ENCODE measurements at regions of chr15 and their contacts with region 1.

Region 1: DNA sequence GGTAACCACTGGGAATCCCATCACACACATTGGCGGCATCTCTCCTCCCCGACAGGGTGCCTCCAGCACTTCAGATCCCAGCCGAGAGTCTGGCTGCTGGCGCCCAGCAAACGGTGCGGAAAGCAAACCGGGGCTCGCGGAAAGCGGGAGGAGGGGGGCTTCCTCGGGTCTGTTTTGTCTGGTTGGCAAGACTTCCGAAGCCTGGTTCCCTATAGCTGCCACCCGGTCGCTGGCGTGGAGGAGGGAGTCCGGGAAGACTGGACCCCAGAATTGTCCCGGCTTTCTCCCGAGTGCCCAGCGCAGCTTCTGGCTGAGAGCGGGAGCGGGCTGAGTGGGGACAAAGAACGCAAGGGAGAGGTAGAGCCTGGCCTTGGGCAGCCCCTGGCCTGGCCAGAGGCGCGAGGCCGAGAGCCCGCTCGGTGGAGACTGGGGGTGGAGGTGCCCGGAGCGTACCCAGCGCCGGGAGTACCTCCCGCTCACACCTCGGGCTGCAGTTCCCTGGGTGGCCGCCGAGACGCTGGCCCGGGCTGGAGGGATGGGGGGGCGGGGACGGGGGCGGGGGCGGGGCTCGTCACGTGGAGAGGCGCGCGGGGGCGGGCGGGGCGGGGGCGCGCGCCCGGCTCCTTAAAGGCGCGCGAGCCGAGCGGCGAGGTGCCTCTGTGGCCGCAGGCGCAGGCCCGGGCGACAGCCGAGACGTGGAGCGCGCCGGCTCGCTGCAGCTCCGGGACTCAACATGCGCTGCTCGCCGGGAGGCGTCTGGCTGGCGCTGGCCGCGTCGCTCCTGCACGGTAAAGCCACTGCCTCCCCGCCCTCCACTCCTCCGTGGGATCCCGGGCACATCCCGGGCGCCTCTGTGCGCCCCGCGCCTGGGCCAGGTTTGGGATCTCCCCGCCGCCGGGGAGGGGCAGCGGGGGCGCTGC is at the start of gene CHRNA7:
- DNase-seq: peak; percentile 16 to 38
- ATAC-seq: peak; percentile 82 to 83
- H3K4me3 ChIP-seq: peak within 1 kb of the TSS; percentile 60 to 63 (median 61)
- H3K27ac ChIP-seq: peak within 1 kb of the TSS; percentile 17 to 57 (median 34)
- H3K4me1 ChIP-seq: peaks cover 10 to 13% of the 10 kb centered on the region in 2 donors
- H3K27me3 ChIP-seq: peaks cover 7 to 18% (median 10%) of the 10 kb centered on the region in 3 donors
- CTCF ChIP-seq: peak in 2 of 5 experiments; percentile 46 to 57
- POLR2A ChIP-seq: peak; percentile 57 to 71
- total RNA-seq, gene CHRNA7: 0.35 to 6.5 (median 0.66) TPM

Region 2: DNA sequence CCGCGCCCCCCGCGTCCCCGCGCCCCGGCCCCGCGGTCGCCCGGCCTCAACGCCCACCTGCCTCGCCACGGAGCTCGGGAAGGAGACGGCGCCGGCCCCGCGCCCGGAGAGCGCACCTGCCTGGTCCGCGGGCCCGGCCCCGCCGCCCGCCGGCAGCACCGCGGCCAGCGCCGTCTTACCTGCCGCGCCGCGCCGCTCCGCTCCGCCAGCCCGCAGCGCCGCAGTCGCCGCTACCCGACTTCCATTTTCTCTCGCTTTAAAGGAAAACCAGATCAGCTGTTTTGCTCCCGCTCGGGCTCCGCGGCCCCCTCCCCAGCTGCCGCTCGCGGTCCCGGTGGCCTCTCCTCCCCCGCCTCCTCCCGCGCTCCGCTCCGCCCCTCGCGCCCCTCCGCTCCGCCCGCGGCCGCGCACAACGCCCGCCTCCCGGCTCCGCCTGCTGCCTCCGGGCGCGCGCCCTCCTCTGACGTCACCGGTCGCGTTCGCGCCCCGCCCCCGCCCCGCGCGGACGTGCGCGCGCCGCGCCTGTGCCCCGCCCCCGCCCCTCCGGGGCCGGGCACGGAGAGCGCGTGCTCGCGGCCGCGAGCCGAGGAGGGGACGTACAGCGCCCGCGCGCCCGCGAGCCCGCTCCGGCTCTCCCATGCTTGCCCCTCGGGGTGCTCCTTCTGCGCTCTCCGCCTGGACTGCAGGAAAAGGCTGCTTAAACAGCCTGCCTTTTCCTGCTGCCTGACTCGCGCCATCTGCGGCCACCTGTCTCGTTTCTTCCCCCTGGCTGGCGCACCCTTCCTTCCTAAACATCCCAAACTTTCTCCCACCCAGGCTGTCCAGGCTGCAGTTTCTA is 159.6 kb before region 1 on chr15:
- in situ Hi-C with region 1: no loop called
- intact Hi-C with region 1: loop called (anchors 1 kb)
- DNase-seq: peak; percentile 74 to 75
- ATAC-seq: peak; percentile 88 to 90
- H3K4me3 ChIP-seq: peak within 1 kb of the TSS; percentile 64 to 85 (median 70)
- H3K27ac ChIP-seq: peak within 1 kb of the TSS; percentile 69 to 87 (median 84)
- H3K4me1 ChIP-seq: peaks cover 6% of the 10 kb centered on the region in 2 donors
- H3K27me3 ChIP-seq: no peaks in the 10 kb centered on the region
- CTCF ChIP-seq: peak in 1 of 5 experiments; percentile 9
- POLR2A ChIP-seq: peak; percentile 42 to 49

Region 3: GRCh38 chr15:31954374-31955172 is 75.5 kb before region 1 on chr15:
- in situ Hi-C with region 1: no loop called
- intact Hi-C with region 1: no loop called
- DNase-seq: no peak
- ATAC-seq: no peak
- H3K4me3 ChIP-seq: no peak overlapping the region
- H3K27ac ChIP-seq: no peak overlapping the region
- H3K4me1 ChIP-seq: no peaks in the 10 kb centered on the region
- H3K27me3 ChIP-seq: peaks cover 0 to 3% (median 0%) of the 10 kb centered on the region in 3 donors
- CTCF ChIP-seq: no peak
- POLR2A ChIP-seq: no peak

Region 4: GRCh38 chr15:31974855-31975829 is 55.0 kb before region 1 on chr15:
- in situ Hi-C with region 1: no loop called
- intact Hi-C with region 1: loop called (anchors 2 kb)
- DNase-seq: no peak
- ATAC-seq: peak; percentile 30 to 38
- H3K4me3 ChIP-seq: peak overlapping the region in 1 of 4 donors; percentile 17
- H3K27ac ChIP-seq: no peak overlapping the region
- H3K4me1 ChIP-seq: peaks cover 7 to 9% of the 10 kb centered on the region in 2 donors
- H3K27me3 ChIP-seq: peaks cover 0 to 16% (median 0%) of the 10 kb centered on the region in 3 donors
- CTCF ChIP-seq: peak in 3 of 5 experiments; percentile 30 to 53 (median 47)
- POLR2A ChIP-seq: no peak